HCT116 (cell line): ENCODE measurements at regions of chr17 and their contacts with region 1.

Region 1: GRCh38 chr17:38982858-38983746 is 15.9 kb upstream of the FBXO47 start:
- DNase-seq: peak; percentile 53
- ATAC-seq: peak; percentile 91
- H3K4me3 ChIP-seq: no peak overlapping the region
- H3K27ac ChIP-seq: no peak overlapping the region
- H3K4me1 ChIP-seq: peaks cover 0 to 7% of the 10 kb centered on the region in 2 experiments; a peak in 2 of 4 replicates
- H3K27me3 ChIP-seq: no peaks in the 10 kb centered on the region
- CTCF ChIP-seq: peak; percentile 72 to 88 (median 82)
- POLR2A ChIP-seq: no peak
- RAD21 ChIP-seq: peak; percentile 93

Region 2: DNA sequence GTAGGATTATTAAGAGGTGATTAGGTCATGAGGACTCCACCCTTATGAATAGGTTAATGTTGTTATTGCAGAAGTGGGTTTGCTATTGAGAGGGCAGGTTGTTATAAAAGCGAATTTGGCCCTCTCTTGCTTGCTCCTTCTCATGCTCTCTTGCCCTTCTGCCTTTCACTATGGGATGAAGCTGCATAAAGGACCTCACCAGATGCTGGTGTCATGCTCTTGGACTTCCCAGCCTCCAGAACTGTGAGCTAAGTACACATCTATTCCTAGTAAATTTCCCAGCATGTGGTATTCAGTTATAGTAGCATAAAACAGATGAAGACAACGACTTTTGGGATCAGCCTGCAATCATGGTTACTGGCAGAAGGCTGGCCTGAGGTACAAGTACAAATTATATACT is 25.5 kb after region 1 on chr17:
- CTCF ChIA-PET with region 1: no interaction called
- POLR2A ChIA-PET with region 1: no interaction called
- RAD21 ChIA-PET with region 1: no interaction called
- intact Hi-C with region 1: no loop called
- DNase-seq: no peak
- ATAC-seq: no peak
- H3K4me3 ChIP-seq: no peak overlapping the region
- H3K27ac ChIP-seq: no peak overlapping the region
- H3K4me1 ChIP-seq: no peaks in the 10 kb centered on the region
- H3K27me3 ChIP-seq: no peaks in the 10 kb centered on the region
- CTCF ChIP-seq: no peak
- POLR2A ChIP-seq: no peak
- RAD21 ChIP-seq: no peak

Region 3: GRCh38 chr17:39164675-39165143 is 181.6 kb after region 1 on chr17:
- CTCF ChIA-PET with region 1: interaction called, 28 read pairs
- POLR2A ChIA-PET with region 1: no interaction called
- RAD21 ChIA-PET with region 1: interaction called in 1 of 2 experiments, 3 read pairs
- intact Hi-C with region 1: no loop called
- DNase-seq: peak; percentile 69
- ATAC-seq: peak; percentile 92
- H3K4me3 ChIP-seq: peak overlapping the region in 1 of 2 experiments; percentile 7; a peak in 2 of 4 replicates
- H3K27ac ChIP-seq: no peak overlapping the region; the same call in 1 of the 2 replicates
- H3K4me1 ChIP-seq: peaks cover 6 to 10% of the 10 kb centered on the region in 2 experiments; a peak in 3 of 4 replicates
- H3K27me3 ChIP-seq: no peaks in the 10 kb centered on the region
- CTCF ChIP-seq: peak; percentile 69 to 92 (median 88); a peak in 5 of 6 replicates
- POLR2A ChIP-seq: no peak
- RAD21 ChIP-seq: peak; percentile 64

Region 4: DNA sequence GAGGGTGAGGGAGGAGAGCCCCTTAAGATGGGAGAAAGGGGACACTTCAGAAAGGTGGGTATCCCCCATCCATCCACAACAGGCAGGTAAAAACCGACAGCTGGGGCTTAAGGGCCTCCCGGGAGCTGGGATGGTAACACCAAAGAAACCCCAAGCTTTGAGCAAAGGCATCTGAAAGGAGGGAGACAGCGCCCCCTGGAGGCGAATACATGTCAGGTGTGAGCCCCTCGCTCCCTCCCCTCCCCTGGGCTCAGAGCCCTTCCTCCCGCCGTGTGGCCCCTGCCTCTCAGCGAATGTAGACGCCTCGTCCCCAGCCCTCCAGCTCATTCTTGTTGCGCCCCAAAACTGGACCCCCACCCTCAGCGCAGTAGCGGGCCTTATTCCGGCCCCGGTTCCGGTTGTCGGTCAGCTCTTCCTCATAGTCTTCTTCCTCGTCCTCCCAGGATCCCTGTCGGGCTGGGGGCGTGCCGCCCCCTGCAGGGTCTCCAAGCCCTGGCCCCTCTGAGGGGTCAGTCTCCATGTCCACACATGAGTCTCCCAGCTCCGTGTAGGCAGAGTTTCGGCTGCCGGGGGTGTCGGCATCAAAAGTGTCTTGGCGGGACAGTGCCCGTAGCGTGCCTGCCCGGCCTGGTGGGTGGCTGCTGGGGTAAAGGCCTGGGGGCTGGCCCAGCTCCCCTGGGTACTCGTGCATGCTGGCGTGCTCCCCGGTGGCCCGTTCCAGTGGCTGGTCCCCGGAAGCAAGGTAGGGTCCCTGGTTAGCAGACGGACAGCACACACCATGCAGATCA is 192.0 kb after region 1 on chr17:
- CTCF ChIA-PET with region 1: interaction called, 24 read pairs
- POLR2A ChIA-PET with region 1: no interaction called
- RAD21 ChIA-PET with region 1: interaction called in 1 of 2 experiments, 4 read pairs
- intact Hi-C with region 1: no loop called
- DNase-seq: peak; percentile 26
- ATAC-seq: peak; percentile 74
- H3K4me3 ChIP-seq: no peak overlapping the region
- H3K27ac ChIP-seq: no peak overlapping the region
- H3K4me1 ChIP-seq: peaks cover 5 to 27% of the 10 kb centered on the region in 2 experiments; a peak in 3 of 4 replicates
- H3K27me3 ChIP-seq: no peaks in the 10 kb centered on the region
- CTCF ChIP-seq: peak in 2 of 3 experiments; percentile 80 to 83; a peak in 4 of 6 replicates
- POLR2A ChIP-seq: no peak
- RAD21 ChIP-seq: peak; percentile 63

Region 5: GRCh38 chr17:39209317-39210092 is 226.4 kb after region 1 on chr17:
- CTCF ChIA-PET with region 1: interaction called, 13 read pairs
- POLR2A ChIA-PET with region 1: no interaction called
- RAD21 ChIA-PET with region 1: interaction called in 1 of 2 experiments, 3 read pairs
- intact Hi-C with region 1: no loop called
- DNase-seq: no peak
- ATAC-seq: no peak
- H3K4me3 ChIP-seq: no peak overlapping the region
- H3K27ac ChIP-seq: no peak overlapping the region
- H3K4me1 ChIP-seq: peaks cover 20 to 39% of the 10 kb centered on the region in 2 experiments
- H3K27me3 ChIP-seq: no peaks in the 10 kb centered on the region
- CTCF ChIP-seq: no peak
- POLR2A ChIP-seq: no peak
- RAD21 ChIP-seq: no peak

Region 6: DNA sequence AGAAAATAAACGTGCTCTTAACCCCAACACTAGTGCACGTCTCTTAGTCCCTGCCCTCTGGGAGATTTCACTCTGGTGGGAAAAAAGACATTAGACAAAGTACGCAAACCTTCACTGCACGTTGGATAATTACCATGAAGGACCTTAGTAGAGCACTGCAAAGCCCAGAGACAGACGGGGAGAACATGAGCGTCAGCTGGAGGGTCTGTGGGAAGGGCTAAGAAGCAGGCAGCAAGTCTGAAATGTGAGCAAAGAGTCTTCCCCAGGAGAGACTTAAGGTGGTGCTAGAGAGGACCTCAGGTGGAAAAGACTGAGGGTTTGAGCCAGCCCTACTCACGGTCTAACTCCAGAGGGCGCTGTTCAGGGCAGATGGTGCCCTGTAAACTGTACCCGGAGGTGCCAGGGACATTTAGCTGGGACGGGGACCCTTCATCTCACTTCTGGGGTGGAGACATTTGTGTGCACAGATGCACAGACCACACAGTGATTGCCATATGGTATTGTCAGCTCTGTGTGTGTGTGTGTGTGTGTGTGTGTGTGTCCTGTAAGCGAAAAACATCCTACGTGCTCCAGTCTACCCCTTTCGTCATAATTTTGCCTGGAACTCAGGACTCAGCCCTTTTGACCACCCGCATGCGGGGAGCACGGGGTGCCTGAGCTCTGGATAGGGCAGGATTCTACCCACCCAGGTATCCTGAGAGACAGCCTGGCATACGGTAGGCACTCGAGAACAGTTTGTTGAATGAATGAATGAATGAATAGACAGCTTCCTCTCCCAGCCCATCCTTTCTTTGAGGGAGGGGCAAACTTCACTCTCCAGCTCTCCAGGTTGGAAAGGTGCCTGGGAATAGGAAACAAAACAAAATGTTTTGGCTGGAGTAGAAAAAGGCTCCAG is 252.7 kb after region 1 on chr17:
- CTCF ChIA-PET with region 1: interaction called, 15 read pairs
- POLR2A ChIA-PET with region 1: no interaction called
- RAD21 ChIA-PET with region 1: interaction called in 1 of 2 experiments, 4 read pairs
- intact Hi-C with region 1: loop called (anchors 5 kb)
- DNase-seq: peak; percentile 87
- ATAC-seq: peak; percentile 83
- H3K4me3 ChIP-seq: no peak overlapping the region; a peak in 1 of 4 replicates
- H3K27ac ChIP-seq: no peak overlapping the region
- H3K4me1 ChIP-seq: peaks cover 18 to 52% of the 10 kb centered on the region in 2 experiments
- H3K27me3 ChIP-seq: no peaks in the 10 kb centered on the region
- CTCF ChIP-seq: peak; percentile 98 to 99 (median 99)
- POLR2A ChIP-seq: no peak
- RAD21 ChIP-seq: peak; percentile 41; the same call in 1 of the 2 replicates

Region 7: GRCh38 chr17:39244600-39245570 is 261.8 kb after region 1 on chr17:
- CTCF ChIA-PET with region 1: interaction called, 24 read pairs
- POLR2A ChIA-PET with region 1: no interaction called
- RAD21 ChIA-PET with region 1: no interaction called
- intact Hi-C with region 1: loop called (anchors 1 kb)
- DNase-seq: peak; percentile 80
- ATAC-seq: peak; percentile 95
- H3K4me3 ChIP-seq: no peak overlapping the region
- H3K27ac ChIP-seq: no peak overlapping the region
- H3K4me1 ChIP-seq: peaks cover under 1 to 13% of the 10 kb centered on the region in 2 experiments; a peak in 3 of 4 replicates
- H3K27me3 ChIP-seq: no peaks in the 10 kb centered on the region
- CTCF ChIP-seq: peak; percentile 91 to 96 (median 95)
- POLR2A ChIP-seq: no peak
- RAD21 ChIP-seq: peak; percentile 95